AG04450 (cell line): ENCODE measurements at regions of chr11 and their contacts with region 1.

Region 1: DNA sequence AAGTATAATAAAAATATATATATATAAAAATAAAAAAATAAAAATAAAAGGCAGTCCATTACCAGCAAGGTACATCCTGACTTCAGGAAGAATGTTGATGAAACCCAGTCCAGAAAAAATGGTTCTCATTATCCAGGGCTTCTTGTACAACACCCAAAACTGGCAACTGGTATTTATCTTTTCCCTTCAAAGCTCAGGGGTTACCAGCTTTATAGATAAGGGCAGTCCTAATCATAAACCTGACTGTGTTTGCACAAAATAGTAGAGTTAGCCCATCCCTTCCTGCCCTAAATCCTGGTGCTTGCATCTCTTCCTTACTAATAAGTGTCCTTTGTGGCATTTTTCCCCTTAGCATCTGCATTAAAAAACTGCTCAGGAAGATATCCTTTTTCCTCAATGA is 97.5 kb downstream of the CSTPP1 start:
- DNase-seq: no peak
- H3K4me3 ChIP-seq: no peak overlapping the region
- H3K27ac ChIP-seq: no peak overlapping the region
- H3K27me3 ChIP-seq: no peaks in the 10 kb centered on the region
- CTCF ChIP-seq: no peak

Region 2: DNA sequence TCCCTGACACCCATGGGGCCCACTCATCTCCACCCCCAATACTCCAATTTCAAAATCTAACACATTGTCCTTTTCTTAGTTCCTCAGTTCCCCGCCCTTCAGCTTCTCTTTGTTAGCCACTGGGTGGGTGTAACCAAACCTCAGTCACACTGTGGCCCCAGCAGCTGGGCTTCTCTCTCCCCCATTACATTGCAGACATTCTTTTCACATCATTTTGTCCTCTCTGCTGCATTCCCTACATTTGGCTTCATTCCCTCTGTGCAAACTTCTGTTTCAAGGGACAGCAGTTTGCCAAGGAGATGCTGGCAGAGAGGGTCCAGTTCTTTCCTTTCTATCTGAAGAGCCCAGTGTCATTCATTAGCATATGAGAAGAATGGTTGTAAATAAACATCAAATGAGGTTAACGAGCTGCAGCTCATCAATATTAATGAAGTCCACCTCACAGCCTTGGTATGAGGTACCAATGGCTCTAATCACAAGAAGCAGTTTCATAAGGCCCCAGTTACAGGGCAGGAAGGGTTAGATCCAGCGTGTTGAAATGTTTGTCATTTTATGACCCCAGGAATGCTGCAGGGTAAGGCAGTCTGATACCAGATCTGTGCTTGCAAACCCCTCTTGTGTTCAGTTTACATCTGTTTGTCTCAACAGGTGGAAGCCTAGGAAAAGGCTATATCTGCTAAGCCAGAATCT is 70.3 kb after region 1 on chr11:
- CTCF ChIA-PET with region 1: no interaction called
- POLR2A ChIA-PET with region 1: interaction called, 10 read pairs
- DNase-seq: no peak
- H3K4me3 ChIP-seq: no peak overlapping the region
- H3K27ac ChIP-seq: no peak overlapping the region
- H3K27me3 ChIP-seq: no peaks in the 10 kb centered on the region
- CTCF ChIP-seq: no peak